CD4-positive, alpha-beta memory T cell (primary cell): ENCODE measurements at regions of chrX and their contacts with region 1.

Region 1: GRCh38 chrX:54639346-54640102 is 109.5 kb downstream of the GNL3L start:
- DNase-seq: peak; percentile 86 to 97 (median 91)
- H3K4me3 ChIP-seq: peak overlapping the region; percentile 57 to 59
- H3K4me3 Mint-ChIP-seq: peak overlapping the region; percentile 89 to 96 (median 94)
- H3K27ac ChIP-seq: peak overlapping the region; percentile 94
- H3K27ac Mint-ChIP-seq: peak overlapping the region; percentile 98 to 100 (median 99)
- H3K4me1 ChIP-seq: peaks cover 12% of the 10 kb centered on the region
- H3K4me1 Mint-ChIP-seq: peaks cover 2 to 23% (median 9%) of the 10 kb centered on the region in 4 donors
- H3K27me3 ChIP-seq: no peaks in the 10 kb centered on the region
- H3K27me3 Mint-ChIP-seq: no peaks in the 10 kb centered on the region

Region 2: GRCh38 chrX:54044126-54044876 is 595.2 kb before region 1 on chrX and contains the start of gene PHF8:
- CTCF ChIA-PET with region 1: no interaction called
- POLR2A ChIA-PET with region 1: interaction called, 38 read pairs
- intact Hi-C with region 1: loop called (anchors 1 kb)
- DNase-seq: peak; percentile 91 to 96 (median 96)
- H3K4me3 ChIP-seq: peak within 1 kb of the TSS; percentile 34 to 69
- H3K4me3 Mint-ChIP-seq: peak within 1 kb of the TSS; percentile 91 to 97 (median 94)
- H3K27ac ChIP-seq: peak within 1 kb of the TSS; percentile 90
- H3K27ac Mint-ChIP-seq: peak within 1 kb of the TSS; percentile 96 to 99 (median 97)
- H3K4me1 ChIP-seq: peaks cover 9% of the 10 kb centered on the region
- H3K4me1 Mint-ChIP-seq: peaks cover 10 to 41% (median 15%) of the 10 kb centered on the region in 4 donors
- H3K27me3 ChIP-seq: no peaks in the 10 kb centered on the region
- H3K27me3 Mint-ChIP-seq: no peaks in the 10 kb centered on the region
- total RNA-seq, gene PHF8: 65.1 to 67.2 TPM

Region 3: DNA sequence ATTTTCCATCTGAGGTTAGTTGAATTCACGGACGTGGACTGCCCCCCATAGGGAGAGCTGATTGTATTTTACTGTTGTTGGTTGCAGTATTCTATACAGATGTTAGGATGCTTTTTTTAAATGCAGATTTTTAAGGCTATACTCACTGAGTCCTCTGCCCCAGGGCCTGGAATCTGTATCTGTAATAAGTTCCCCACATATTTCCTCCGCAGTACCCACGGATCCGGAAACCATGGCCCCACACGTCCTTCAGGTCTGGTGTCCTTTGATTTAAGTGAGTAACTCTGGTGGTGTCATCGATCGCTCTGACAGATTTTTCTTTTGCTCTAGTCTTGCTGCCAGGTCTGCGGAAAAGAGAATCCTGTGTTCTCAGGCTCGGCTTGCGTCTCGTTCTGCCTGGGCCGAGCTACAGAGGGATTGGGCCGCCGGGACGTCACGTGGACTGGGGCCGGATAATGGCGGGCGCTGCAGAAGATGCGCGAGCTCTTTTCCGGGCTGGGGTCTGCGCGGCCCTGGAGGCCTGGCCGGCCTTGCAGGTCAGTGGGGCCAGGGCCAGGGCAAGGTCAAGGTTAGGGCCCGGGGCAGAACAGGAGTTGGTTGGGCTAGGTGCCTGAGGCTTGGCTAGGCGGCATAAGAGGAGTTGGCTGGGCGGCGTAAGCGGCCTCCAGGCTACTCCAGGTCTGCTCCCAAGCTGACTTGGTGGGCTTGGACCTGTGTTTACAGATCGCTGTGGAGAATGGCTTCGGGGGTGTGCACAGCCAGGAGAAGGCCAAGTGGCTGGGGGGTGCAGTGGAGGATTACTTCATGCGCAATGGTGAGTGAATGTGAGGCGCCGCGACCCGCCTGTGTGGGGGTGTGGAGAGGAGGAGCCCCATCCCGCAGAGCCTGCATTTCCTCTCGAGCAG is 199.3 kb before region 1 on chrX and contains the start of gene TSR2:
- CTCF ChIA-PET with region 1: no interaction called
- POLR2A ChIA-PET with region 1: interaction called, 21 read pairs
- intact Hi-C with region 1: loop called (anchors 1 kb)
- DNase-seq: peak; percentile 76 to 88 (median 80)
- H3K4me3 ChIP-seq: peak within 1 kb of the TSS; percentile 69 to 81
- H3K4me3 Mint-ChIP-seq: peak within 1 kb of the TSS; percentile 86 to 97 (median 93)
- H3K27ac ChIP-seq: peak within 1 kb of the TSS; percentile 75
- H3K27ac Mint-ChIP-seq: peak within 1 kb of the TSS; percentile 84 to 92 (median 90)
- H3K4me1 ChIP-seq: peaks cover 26% of the 10 kb centered on the region
- H3K4me1 Mint-ChIP-seq: peaks cover 15 to 35% (median 25%) of the 10 kb centered on the region in 4 donors
- H3K27me3 ChIP-seq: no peaks in the 10 kb centered on the region
- H3K27me3 Mint-ChIP-seq: no peaks in the 10 kb centered on the region
- total RNA-seq, gene TSR2: 39.2 to 42.1 TPM

Region 4: DNA sequence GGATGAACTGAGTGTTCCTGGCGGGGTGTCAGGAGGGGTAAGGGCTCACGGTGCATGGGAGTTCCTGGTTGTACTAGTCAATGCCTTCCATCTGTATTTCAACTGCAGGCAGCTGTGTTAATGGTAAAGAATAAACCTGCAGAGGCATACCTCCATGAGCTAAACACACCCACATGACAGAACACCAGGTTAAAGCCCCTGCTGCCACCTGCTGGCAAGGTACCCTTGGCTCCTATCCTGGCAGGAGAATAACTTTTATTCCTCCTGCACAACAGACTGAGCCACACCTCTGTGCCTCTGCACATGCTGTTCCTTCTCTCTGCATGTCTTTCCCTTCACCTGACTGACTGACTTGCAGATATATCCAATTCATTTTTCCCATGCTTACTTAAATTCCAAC is 147.4 kb after region 1 on chrX:
- CTCF ChIA-PET with region 1: interaction called, 9 read pairs
- POLR2A ChIA-PET with region 1: interaction called, 13 read pairs
- intact Hi-C with region 1: loop called (anchors 1 kb)
- DNase-seq: peak in 4 of 5 donors; percentile 23 to 41 (median 36)
- H3K4me3 ChIP-seq: no peak overlapping the region
- H3K4me3 Mint-ChIP-seq: no peak overlapping the region
- H3K27ac ChIP-seq: no peak overlapping the region
- H3K27ac Mint-ChIP-seq: no peak overlapping the region
- H3K4me1 ChIP-seq: no peaks in the 10 kb centered on the region
- H3K4me1 Mint-ChIP-seq: no peaks in the 10 kb centered on the region
- H3K27me3 ChIP-seq: no peaks in the 10 kb centered on the region
- H3K27me3 Mint-ChIP-seq: peaks cover 0 to 3% of the 10 kb centered on the region in 2 donors

Region 5: DNA sequence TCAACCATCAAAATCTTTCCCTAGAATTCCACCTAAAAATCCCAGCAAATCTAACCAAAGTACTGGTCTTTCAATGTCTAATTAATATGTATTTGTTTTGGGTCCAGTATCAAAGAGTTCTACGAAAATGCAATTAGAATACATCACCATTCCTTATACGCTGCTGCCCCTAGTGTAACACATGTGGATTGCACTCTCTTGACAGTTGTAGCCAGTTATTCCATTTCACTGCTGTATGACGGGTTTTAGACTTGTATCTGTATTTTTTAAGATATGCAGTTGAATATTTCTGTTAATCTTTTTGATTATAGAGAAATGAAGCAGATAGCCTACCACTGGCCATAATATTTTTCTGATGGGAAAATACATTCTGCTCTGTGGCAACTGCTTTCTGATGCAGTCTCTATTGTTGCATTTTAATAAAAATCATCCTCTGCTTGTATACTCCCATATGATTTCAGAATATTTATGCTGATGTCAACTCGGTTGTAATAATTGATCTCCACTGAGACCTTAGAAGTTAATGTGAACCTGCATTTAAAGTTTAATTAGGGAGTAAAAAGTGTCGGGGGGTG is 418.2 kb after region 1 on chrX:
- CTCF ChIA-PET with region 1: interaction called, 6 read pairs
- POLR2A ChIA-PET with region 1: interaction called, 5 read pairs
- intact Hi-C with region 1: loop called (anchors 2 kb)
- DNase-seq: peak in 4 of 5 donors; percentile 31 to 41 (median 40)
- H3K4me3 ChIP-seq: no peak overlapping the region
- H3K4me3 Mint-ChIP-seq: peak overlapping the region; percentile 64 to 87 (median 74)
- H3K27ac ChIP-seq: no peak overlapping the region
- H3K27ac Mint-ChIP-seq: peak overlapping the region; percentile 24 to 93 (median 74)
- H3K4me1 ChIP-seq: peaks cover 16% of the 10 kb centered on the region
- H3K4me1 Mint-ChIP-seq: peaks cover 8 to 25% (median 15%) of the 10 kb centered on the region in 4 donors
- H3K27me3 ChIP-seq: no peaks in the 10 kb centered on the region
- H3K27me3 Mint-ChIP-seq: no peaks in the 10 kb centered on the region

Region 6: GRCh38 chrX:55187281-55187680 is 547.8 kb after region 1 on chrX:
- CTCF ChIA-PET with region 1: no interaction called
- POLR2A ChIA-PET with region 1: no interaction called
- intact Hi-C with region 1: no loop called
- DNase-seq: no peak
- H3K4me3 ChIP-seq: no peak overlapping the region
- H3K4me3 Mint-ChIP-seq: no peak overlapping the region
- H3K27ac ChIP-seq: no peak overlapping the region
- H3K27ac Mint-ChIP-seq: no peak overlapping the region
- H3K4me1 ChIP-seq: no peaks in the 10 kb centered on the region
- H3K4me1 Mint-ChIP-seq: no peaks in the 10 kb centered on the region
- H3K27me3 ChIP-seq: no peaks in the 10 kb centered on the region
- H3K27me3 Mint-ChIP-seq: peaks cover 0 to 5% of the 10 kb centered on the region in 2 donors

Region 7: DNA sequence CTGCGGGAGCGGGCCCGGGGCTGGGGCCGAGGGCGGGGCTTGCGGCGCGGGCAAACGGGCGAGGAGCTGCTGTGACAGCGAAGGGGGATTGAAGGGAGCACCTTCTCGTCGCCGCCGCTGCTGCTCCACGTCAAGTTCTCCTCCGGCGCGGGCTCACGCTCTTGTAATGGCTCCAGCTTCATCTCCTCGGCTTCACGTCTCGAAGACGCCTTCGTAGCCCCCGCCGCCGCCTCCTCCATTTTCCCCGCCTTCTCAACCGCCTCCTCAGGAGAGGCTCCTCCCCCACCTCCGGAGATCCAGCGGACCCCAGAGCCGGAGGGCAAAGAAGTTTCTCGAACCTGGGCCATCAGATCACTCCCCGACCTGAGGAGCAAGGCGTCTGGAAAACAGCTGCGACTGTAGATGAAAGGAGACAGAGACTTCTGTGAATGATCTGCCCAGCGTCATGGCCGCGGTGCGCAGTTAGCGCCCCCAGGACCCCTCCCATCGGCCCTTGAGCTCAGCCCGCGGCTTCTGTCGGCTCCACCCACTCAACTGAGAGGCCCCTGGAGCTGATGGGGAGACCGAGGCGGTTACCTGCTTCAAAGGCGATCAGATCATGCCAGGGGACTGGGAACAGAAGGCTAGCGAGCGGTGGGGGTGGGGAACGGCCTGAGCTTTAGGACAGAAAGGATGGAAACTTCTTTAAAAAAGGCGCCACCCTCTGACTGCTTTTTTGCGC is 849.2 kb after region 1 on chrX:
- CTCF ChIA-PET with region 1: interaction called, 3 read pairs
- POLR2A ChIA-PET with region 1: interaction called, 10 read pairs
- intact Hi-C with region 1: no loop called
- DNase-seq: peak; percentile 66 to 74 (median 71)
- H3K4me3 ChIP-seq: peak overlapping the region; percentile 52 to 86
- H3K4me3 Mint-ChIP-seq: peak overlapping the region; percentile 93 to 97 (median 94)
- H3K27ac ChIP-seq: peak overlapping the region; percentile 83
- H3K27ac Mint-ChIP-seq: peak overlapping the region; percentile 93 to 98 (median 95)
- H3K4me1 ChIP-seq: peaks cover 10% of the 10 kb centered on the region
- H3K4me1 Mint-ChIP-seq: peaks cover 4 to 18% (median 12%) of the 10 kb centered on the region in 4 donors
- H3K27me3 ChIP-seq: no peaks in the 10 kb centered on the region
- H3K27me3 Mint-ChIP-seq: no peaks in the 10 kb centered on the region